CD4-positive, alpha-beta memory T cell (primary cell): ENCODE measurements at regions of chr7 and their contacts with region 1.

Region 1: GRCh38 chr7:55641273-55641691 is 69.0 kb upstream of the VOPP1 start:
- DNase-seq: peak; percentile 46 to 63 (median 59)
- H3K4me3 ChIP-seq: no peak overlapping the region
- H3K4me3 Mint-ChIP-seq: peak overlapping the region in 1 of 8 donors; percentile 39
- H3K27ac ChIP-seq: no peak overlapping the region
- H3K27ac Mint-ChIP-seq: peak overlapping the region in 1 of 7 donors; percentile 19
- H3K4me1 ChIP-seq: peaks cover 14% of the 10 kb centered on the region
- H3K4me1 Mint-ChIP-seq: peaks cover 9 to 11% (median 10%) of the 10 kb centered on the region in 4 donors
- H3K27me3 ChIP-seq: no peaks in the 10 kb centered on the region
- H3K27me3 Mint-ChIP-seq: peaks cover 0 to 1% of the 10 kb centered on the region in 2 donors

Region 2: GRCh38 chr7:55629051-55629677 is 12.1 kb before region 1 on chr7:
- CTCF ChIA-PET with region 1: interaction called, 15 read pairs
- POLR2A ChIA-PET with region 1: no interaction called
- intact Hi-C with region 1: no loop called
- DNase-seq: no peak
- H3K4me3 ChIP-seq: no peak overlapping the region
- H3K4me3 Mint-ChIP-seq: no peak overlapping the region
- H3K27ac ChIP-seq: no peak overlapping the region
- H3K27ac Mint-ChIP-seq: no peak overlapping the region
- H3K4me1 ChIP-seq: no peaks in the 10 kb centered on the region
- H3K4me1 Mint-ChIP-seq: no peaks in the 10 kb centered on the region
- H3K27me3 ChIP-seq: no peaks in the 10 kb centered on the region
- H3K27me3 Mint-ChIP-seq: peaks cover 5% of the 10 kb centered on the region in 2 donors

Region 3: GRCh38 chr7:55723621-55723941 is 82.3 kb after region 1 on chr7:
- CTCF ChIA-PET with region 1: interaction called, 9 read pairs
- POLR2A ChIA-PET with region 1: no interaction called
- intact Hi-C with region 1: loop called (anchors 1 kb)
- DNase-seq: no peak
- H3K4me3 ChIP-seq: no peak overlapping the region
- H3K4me3 Mint-ChIP-seq: no peak overlapping the region
- H3K27ac ChIP-seq: no peak overlapping the region
- H3K27ac Mint-ChIP-seq: no peak overlapping the region
- H3K4me1 ChIP-seq: no peaks in the 10 kb centered on the region
- H3K4me1 Mint-ChIP-seq: no peaks in the 10 kb centered on the region
- H3K27me3 ChIP-seq: no peaks in the 10 kb centered on the region
- H3K27me3 Mint-ChIP-seq: peaks cover 0 to 2% of the 10 kb centered on the region in 2 donors

Region 4: DNA sequence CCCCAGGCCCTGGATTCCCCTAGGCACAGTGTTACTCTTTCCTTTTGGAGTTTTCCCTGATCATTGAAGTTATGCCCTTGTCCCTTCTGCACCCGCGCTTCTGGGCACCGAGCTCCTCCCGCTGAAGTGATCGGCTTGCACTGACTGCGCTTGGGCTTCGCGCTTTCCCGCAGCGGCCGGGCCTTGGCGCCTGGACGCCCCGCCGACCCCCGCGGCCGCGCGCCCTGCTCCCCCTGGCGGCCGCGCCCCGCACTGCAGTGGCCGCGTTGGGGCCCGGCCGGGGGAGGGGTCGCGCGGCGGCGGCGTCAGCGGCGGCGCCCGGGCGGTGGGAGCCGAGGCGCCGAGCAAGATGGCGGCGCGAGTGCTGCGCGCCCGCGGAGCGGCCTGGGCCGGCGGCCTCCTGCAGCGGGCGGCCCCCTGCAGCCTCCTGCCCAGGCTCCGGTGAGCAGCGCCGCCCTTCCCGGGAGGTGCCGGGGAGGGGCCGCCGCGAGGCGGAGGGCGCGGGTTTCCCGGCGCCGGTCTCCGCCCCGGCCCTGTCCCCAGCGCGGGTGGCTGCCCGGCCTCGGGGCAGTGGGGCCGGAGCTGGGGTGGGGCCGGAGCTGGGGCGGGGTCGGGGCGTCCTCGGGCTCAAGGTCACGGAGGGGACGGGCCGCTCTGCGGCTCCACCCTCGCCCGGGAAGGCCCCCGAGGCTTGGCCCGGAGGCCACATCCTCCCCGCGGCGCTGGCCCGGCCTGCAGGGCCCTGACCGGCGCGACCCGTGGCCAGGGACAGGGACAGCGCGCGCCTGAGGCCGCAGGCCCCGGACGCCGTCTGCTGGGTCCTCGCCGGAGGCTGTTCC is 323.2 kb after region 1 on chr7 and contains the start of gene NIPSNAP2:
- CTCF ChIA-PET with region 1: interaction called, 25 read pairs
- POLR2A ChIA-PET with region 1: interaction called, 5 read pairs
- intact Hi-C with region 1: loop called (anchors 1 kb)
- DNase-seq: peak; percentile 55 to 77 (median 65)
- H3K4me3 ChIP-seq: peak within 1 kb of the TSS; percentile 42 to 62
- H3K4me3 Mint-ChIP-seq: peak within 1 kb of the TSS; percentile 82 to 90 (median 86)
- H3K27ac ChIP-seq: peak within 1 kb of the TSS; percentile 76
- H3K27ac Mint-ChIP-seq: peak within 1 kb of the TSS; percentile 89 to 94 (median 94)
- H3K4me1 ChIP-seq: peaks cover 19% of the 10 kb centered on the region
- H3K4me1 Mint-ChIP-seq: peaks cover 29 to 49% (median 32%) of the 10 kb centered on the region in 4 donors
- H3K27me3 ChIP-seq: no peaks in the 10 kb centered on the region
- H3K27me3 Mint-ChIP-seq: no peaks in the 10 kb centered on the region
- total RNA-seq, gene NIPSNAP2: 29.0 to 33.3 TPM

Region 5: GRCh38 chr7:56074371-56074791 is 433.1 kb after region 1 on chr7:
- CTCF ChIA-PET with region 1: interaction called, 37 read pairs
- POLR2A ChIA-PET with region 1: interaction called, 3 read pairs
- intact Hi-C with region 1: loop called (anchors 1 kb)
- DNase-seq: peak; percentile 50 to 71 (median 56)
- H3K4me3 ChIP-seq: no peak overlapping the region
- H3K4me3 Mint-ChIP-seq: no peak overlapping the region
- H3K27ac ChIP-seq: no peak overlapping the region
- H3K27ac Mint-ChIP-seq: peak overlapping the region in 6 of 7 donors; percentile 6 to 86 (median 72)
- H3K4me1 ChIP-seq: no peaks in the 10 kb centered on the region
- H3K4me1 Mint-ChIP-seq: peaks cover 3 to 6% (median 6%) of the 10 kb centered on the region in 4 donors
- H3K27me3 ChIP-seq: no peaks in the 10 kb centered on the region
- H3K27me3 Mint-ChIP-seq: no peaks in the 10 kb centered on the region